ENCODE measurements at regions of chr1 and their contacts with region 1.

Region 1: DNA sequence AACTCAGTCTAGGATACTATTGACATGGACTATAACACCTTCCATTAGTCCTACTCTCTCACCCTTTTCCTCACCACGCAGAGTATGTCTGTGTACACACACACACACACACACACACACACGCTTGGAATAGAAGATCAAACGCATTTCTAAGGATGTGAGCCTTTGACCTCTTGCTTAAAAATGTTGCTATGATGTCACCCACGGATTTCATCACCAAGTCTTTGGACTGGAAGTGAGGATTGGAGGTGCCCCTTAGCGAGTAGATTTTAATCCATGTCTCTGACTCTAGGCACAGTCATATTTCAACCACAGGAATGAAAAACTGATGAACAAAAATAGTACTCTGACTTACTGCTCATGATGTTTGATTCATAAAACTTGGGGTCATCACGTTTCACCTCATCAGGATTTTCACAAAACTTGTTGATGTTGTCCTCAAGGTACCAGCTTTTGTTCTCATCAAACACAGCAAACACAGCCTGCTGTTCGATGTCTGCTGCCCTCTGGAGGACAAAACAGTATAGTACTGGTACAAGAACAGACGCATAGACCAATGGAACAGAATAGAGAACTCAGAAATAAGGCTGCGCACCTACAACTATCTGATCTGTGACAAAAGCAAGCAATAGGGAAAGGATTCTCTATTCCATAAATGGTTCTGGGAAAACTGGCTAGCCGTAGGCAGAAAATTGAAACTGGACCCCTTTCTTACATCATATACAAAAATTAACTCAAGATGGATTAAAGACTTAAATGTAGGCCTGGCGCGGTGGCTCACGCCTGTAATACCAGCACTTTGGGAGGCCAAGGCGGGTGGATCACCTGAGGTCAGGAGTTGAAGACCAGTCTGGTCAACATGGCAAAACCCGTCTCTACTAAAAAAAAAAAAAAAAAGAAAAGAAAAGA is 39.9 kb downstream of the F5 start:
- DNase-seq: peak; percentile 74
- H3K4me3 Mint-ChIP-seq: no peak overlapping the region
- H3K27ac Mint-ChIP-seq: no peak overlapping the region
- H3K4me1 Mint-ChIP-seq: peaks cover 12% of the 10 kb centered on the region
- H3K27me3 Mint-ChIP-seq: no peaks in the 10 kb centered on the region
- CTCF ChIP-seq: peak; percentile 71

Region 2: DNA sequence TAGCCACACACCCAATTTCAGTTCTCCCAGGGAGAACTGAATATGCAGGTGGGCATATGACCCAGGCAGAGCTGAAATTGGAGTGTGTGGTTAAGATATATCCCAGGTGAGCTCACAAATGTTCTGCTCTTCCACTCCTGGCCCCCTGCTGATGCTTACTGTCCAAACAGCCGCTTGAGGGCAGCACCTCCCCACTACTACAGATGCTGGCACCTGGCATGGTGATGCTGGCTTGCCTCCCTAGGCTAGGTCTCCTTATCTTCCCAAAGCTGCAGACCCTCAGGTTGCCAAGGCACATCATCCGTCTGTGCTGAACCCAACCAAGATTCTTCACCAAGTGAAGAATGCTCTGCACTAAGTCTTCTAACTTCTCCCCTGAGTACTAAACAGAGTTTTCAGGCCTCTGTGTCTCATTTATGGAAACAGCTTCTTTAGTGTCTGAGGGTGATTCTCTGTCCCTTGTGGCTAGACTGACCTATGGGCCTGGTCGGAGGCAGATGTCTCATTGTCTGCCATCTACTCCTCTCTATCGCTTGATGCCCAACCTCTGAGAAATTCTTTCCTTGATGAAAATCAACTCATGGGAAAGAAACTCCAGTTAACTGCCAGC is 942.7 kb before region 1 on chr1:
- CTCF ChIA-PET with region 1: interaction called, 5 read pairs
- intact Hi-C with region 1: loop called (anchors 5 kb)
- DNase-seq: peak; percentile 87
- H3K4me3 Mint-ChIP-seq: no peak overlapping the region
- H3K27ac Mint-ChIP-seq: no peak overlapping the region
- H3K4me1 Mint-ChIP-seq: peaks cover 24% of the 10 kb centered on the region
- H3K27me3 Mint-ChIP-seq: no peaks in the 10 kb centered on the region
- CTCF ChIP-seq: peak; percentile 83

Region 3: DNA sequence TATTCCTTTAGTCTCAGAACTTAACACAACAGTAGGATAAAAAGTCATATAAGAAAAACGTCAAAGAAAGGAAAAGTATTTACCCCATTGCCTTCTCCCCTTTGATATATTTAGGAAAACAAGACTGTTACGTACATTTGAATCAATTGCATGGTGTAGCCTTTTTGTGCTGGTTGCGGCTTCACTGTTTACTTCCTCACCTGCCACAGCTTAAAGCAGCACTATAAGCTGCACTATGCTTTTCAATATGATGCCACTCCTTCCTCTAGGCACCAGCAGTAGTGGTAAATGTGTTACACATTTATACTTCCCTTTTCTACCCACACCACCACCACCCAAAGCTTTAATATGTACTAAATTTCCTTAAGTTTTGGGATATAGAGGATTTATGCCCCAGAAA is 328.7 kb before region 1 on chr1:
- CTCF ChIA-PET with region 1: no interaction called
- intact Hi-C with region 1: no loop called
- DNase-seq: no peak
- H3K4me3 Mint-ChIP-seq: no peak overlapping the region
- H3K27ac Mint-ChIP-seq: no peak overlapping the region
- H3K4me1 Mint-ChIP-seq: peaks cover 9% of the 10 kb centered on the region
- H3K27me3 Mint-ChIP-seq: no peaks in the 10 kb centered on the region
- CTCF ChIP-seq: no peak

Region 4: GRCh38 chr1:169466259-169467230 is 79.8 kb before region 1 on chr1:
- CTCF ChIA-PET with region 1: interaction called, 10 read pairs
- intact Hi-C with region 1: loop called (anchors 1 kb)
- DNase-seq: peak; percentile 56
- H3K4me3 Mint-ChIP-seq: no peak overlapping the region
- H3K27ac Mint-ChIP-seq: no peak overlapping the region
- H3K4me1 Mint-ChIP-seq: peaks cover 2% of the 10 kb centered on the region
- H3K27me3 Mint-ChIP-seq: no peaks in the 10 kb centered on the region
- CTCF ChIP-seq: peak; percentile 59

Region 5: GRCh38 chr1:169586395-169587255 is 40.3 kb after region 1 on chr1 and contains the start of gene F5:
- CTCF ChIA-PET with region 1: interaction called, 5 read pairs
- intact Hi-C with region 1: loop called (anchors 2 kb)
- DNase-seq: peak; percentile 91
- H3K4me3 Mint-ChIP-seq: peak within 1 kb of the TSS; percentile 78
- H3K27ac Mint-ChIP-seq: peak within 1 kb of the TSS; percentile 83
- H3K4me1 Mint-ChIP-seq: peaks cover 35% of the 10 kb centered on the region
- H3K27me3 Mint-ChIP-seq: no peaks in the 10 kb centered on the region
- CTCF ChIP-seq: peak; percentile 51
- total RNA-seq, gene F5: 8.1 and 16.2 TPM in 2 replicates

Region 6: GRCh38 chr1:169809370-169810095 is 263.2 kb after region 1 on chr1:
- CTCF ChIA-PET with region 1: interaction called, 4 read pairs
- intact Hi-C with region 1: loop called (anchors 1 kb)
- DNase-seq: peak; percentile 35
- H3K4me3 Mint-ChIP-seq: no peak overlapping the region
- H3K27ac Mint-ChIP-seq: no peak overlapping the region
- H3K4me1 Mint-ChIP-seq: no peaks in the 10 kb centered on the region
- H3K27me3 Mint-ChIP-seq: no peaks in the 10 kb centered on the region
- CTCF ChIP-seq: peak; percentile 71

Region 7: GRCh38 chr1:169824153-169824552 is 277.8 kb after region 1 on chr1:
- CTCF ChIA-PET with region 1: no interaction called
- intact Hi-C with region 1: no loop called
- DNase-seq: no peak
- H3K4me3 Mint-ChIP-seq: no peak overlapping the region
- H3K27ac Mint-ChIP-seq: no peak overlapping the region
- H3K4me1 Mint-ChIP-seq: no peaks in the 10 kb centered on the region
- H3K27me3 Mint-ChIP-seq: no peaks in the 10 kb centered on the region
- CTCF ChIP-seq: no peak